Activated CD8-positive, alpha-beta T cell treated with anti-CD3 and anti-CD28 coated beads for 36 hours (primary cell): ENCODE measurements at regions of chr6 and their contacts with region 1.

Region 1: GRCh38 chr6:36340618-36341454 is 4.1 kb upstream of the BNIP5 start:
- DNase-seq: peak; percentile 83
- ATAC-seq: peak; percentile 91
- H3K4me3 Mint-ChIP-seq: no peak overlapping the region
- H3K27ac Mint-ChIP-seq: no peak overlapping the region
- H3K4me1 Mint-ChIP-seq: peaks cover 12% of the 10 kb centered on the region
- H3K27me3 Mint-ChIP-seq: peaks cover 14% of the 10 kb centered on the region
- CTCF ChIP-seq: peak; percentile 98

Region 2: DNA sequence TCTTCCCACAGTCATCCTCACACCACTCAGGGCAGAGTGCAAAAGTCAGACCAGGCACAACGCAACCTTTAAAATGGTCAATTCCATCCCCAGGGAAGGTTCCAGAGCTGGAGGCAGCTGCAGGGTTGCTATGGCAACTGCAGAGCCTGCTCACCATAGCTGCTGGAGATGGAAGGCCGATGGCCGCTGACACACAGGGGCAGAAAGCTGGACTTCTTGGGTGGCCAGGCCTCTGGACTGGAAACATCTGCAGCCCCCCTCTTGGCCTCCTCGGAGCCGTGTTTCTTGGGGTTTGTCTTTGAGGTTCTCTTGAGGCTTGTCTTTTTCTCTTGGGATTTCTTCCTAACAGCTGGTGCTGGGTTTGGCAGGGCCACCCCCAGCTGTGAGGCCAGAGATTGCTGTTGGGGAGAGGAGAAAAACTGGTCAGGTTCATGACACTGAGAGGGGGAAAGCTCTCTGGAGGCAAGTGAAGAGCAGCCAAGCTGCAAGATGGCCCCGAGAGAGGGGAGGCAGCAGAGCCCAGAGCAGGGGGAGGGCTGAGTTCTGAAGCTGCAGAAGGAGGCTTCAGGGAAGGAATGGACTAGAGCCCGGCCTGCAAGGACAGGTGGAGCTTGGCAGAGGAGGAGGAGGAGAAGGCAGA is 14.4 kb before region 1 on chr6:
- CTCF ChIA-PET with region 1: interaction called, 21 read pairs
- POLR2A ChIA-PET with region 1: no interaction called
- intact Hi-C with region 1: no loop called
- DNase-seq: no peak
- ATAC-seq: no peak
- H3K4me3 Mint-ChIP-seq: no peak overlapping the region
- H3K27ac Mint-ChIP-seq: no peak overlapping the region
- H3K4me1 Mint-ChIP-seq: no peaks in the 10 kb centered on the region
- H3K27me3 Mint-ChIP-seq: peaks cover 1% of the 10 kb centered on the region
- CTCF ChIP-seq: no peak

Region 3: DNA sequence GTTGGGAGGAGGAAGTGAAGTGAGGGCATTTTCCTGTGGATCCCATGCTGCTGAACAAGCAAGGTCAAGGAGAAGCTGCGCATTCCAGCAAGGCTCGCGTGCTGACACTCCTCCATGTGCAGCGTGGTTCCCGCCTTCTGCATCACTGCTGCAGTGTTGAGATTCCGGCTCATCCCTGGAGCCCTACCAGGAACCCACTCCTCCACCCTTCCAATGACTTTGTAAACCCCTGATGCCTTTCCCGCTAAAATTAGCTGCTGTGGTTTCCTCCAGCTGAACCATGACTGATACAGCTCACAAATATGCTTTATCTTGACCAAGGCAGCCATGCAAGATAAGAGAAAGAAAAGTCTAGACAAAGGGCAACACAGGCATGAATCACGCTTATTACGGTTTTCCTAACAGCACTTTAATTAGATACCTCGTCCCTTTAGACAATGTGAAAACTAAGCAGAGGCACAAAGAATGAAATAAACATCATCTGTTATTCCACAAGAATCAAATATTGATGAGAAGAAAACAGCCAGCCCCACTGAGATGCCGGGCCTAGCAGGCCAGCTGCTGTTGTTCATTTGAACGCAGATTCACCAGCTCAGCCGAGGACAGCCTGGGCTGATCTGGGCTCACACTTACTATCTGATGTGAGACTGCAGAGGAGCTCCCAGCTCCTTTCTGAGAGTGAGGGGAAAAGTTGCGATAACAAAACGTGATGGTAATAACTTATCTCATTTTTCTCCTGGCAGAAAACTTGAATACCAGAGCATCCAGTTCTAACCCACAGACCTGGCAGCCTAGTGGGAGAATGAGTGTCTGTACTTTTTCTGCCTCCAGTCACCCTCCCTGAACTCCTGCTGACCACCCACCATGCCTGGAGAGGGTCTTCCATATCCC is 10.1 kb after region 1 on chr6:
- CTCF ChIA-PET with region 1: interaction called, 136 read pairs
- POLR2A ChIA-PET with region 1: interaction called, 3 read pairs
- intact Hi-C with region 1: no loop called
- DNase-seq: no peak
- ATAC-seq: no peak
- H3K4me3 Mint-ChIP-seq: no peak overlapping the region
- H3K27ac Mint-ChIP-seq: no peak overlapping the region
- H3K4me1 Mint-ChIP-seq: peaks cover 5% of the 10 kb centered on the region
- H3K27me3 Mint-ChIP-seq: peaks cover 2% of the 10 kb centered on the region
- CTCF ChIP-seq: no peak

Region 4: GRCh38 chr6:36360241-36361054 is 19.6 kb after region 1 on chr6:
- CTCF ChIA-PET with region 1: interaction called, 136 read pairs
- POLR2A ChIA-PET with region 1: no interaction called
- intact Hi-C with region 1: loop called (anchors 2 kb)
- DNase-seq: peak; percentile 84
- ATAC-seq: peak; percentile 93
- H3K4me3 Mint-ChIP-seq: no peak overlapping the region
- H3K27ac Mint-ChIP-seq: no peak overlapping the region
- H3K4me1 Mint-ChIP-seq: peaks cover 12% of the 10 kb centered on the region
- H3K27me3 Mint-ChIP-seq: no peaks in the 10 kb centered on the region
- CTCF ChIP-seq: peak; percentile 79

Region 5: GRCh38 chr6:36491378-36491965 is 150.6 kb after region 1 on chr6:
- CTCF ChIA-PET with region 1: no interaction called
- POLR2A ChIA-PET with region 1: no interaction called
- intact Hi-C with region 1: no loop called
- DNase-seq: no peak
- ATAC-seq: no peak
- H3K4me3 Mint-ChIP-seq: no peak overlapping the region
- H3K27ac Mint-ChIP-seq: peak overlapping the region; percentile 61
- H3K4me1 Mint-ChIP-seq: peaks cover 16% of the 10 kb centered on the region
- H3K27me3 Mint-ChIP-seq: no peaks in the 10 kb centered on the region
- CTCF ChIP-seq: no peak